PC-9 (cell line): ENCODE measurements at regions of chr20 and their contacts with region 1.

Region 1: GRCh38 chr20:50153485-50154377 is at the start of gene PEDS1:
- DNase-seq: peak; percentile 79 to 94
- H3K4me3 ChIP-seq: peak within 1 kb of the TSS; percentile 80
- H3K27ac ChIP-seq: no peak within 1 kb of the TSS; the same call in 1 of the 2 replicates
- H3K4me1 ChIP-seq: peaks cover 34% of the 10 kb centered on the region
- H3K27me3 ChIP-seq: no peaks in the 10 kb centered on the region
- CTCF ChIP-seq: no peak
- total RNA-seq, gene PEDS1: 34.8 and 37.7 TPM in 2 replicates

Region 2: GRCh38 chr20:50070991-50071888 is 82.5 kb before region 1 on chr20:
- CTCF ChIA-PET with region 1: interaction called, 7 read pairs
- POLR2A ChIA-PET with region 1: no interaction called
- intact Hi-C with region 1: loop called (anchors 2 kb)
- DNase-seq: peak; percentile 69 to 96
- H3K4me3 ChIP-seq: peak overlapping the region; percentile 66
- H3K27ac ChIP-seq: no peak overlapping the region
- H3K4me1 ChIP-seq: 0 out of 2 replicates have a peak, but pooled peaks cover 5% of the 10 kb centered on the region
- H3K27me3 ChIP-seq: no peaks in the 10 kb centered on the region
- CTCF ChIP-seq: peak; percentile 100

Region 3: DNA sequence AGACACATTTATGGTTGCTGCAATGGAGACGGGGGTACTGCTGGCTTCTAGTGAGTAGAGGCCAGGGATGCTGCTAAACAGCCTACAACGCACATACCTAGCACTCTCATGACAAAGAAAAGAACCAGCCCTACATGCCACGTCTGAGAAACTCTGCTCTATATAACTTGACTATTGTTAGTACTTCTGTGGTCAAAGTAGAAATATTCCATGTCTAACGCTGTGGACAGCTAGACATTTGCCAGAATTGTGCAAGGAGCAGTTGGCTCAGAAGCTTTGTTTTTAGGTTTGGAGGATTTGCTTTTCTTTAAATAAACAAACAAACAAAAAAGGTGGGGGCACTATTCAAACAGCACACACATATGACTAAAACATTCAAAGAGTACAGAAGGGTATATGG is 61.3 kb before region 1 on chr20:
- CTCF ChIA-PET with region 1: interaction called, 25 read pairs
- POLR2A ChIA-PET with region 1: interaction called, 5 read pairs
- intact Hi-C with region 1: no loop called
- DNase-seq: no peak
- H3K4me3 ChIP-seq: no peak overlapping the region
- H3K27ac ChIP-seq: 0 out of 2 replicates have a peak overlapping the region, but pooled peaks have one; percentile 11
- H3K4me1 ChIP-seq: peaks cover 25% of the 10 kb centered on the region
- H3K27me3 ChIP-seq: no peaks in the 10 kb centered on the region
- CTCF ChIP-seq: no peak

Region 4: GRCh38 chr20:50120897-50121693 is 32.6 kb before region 1 on chr20:
- CTCF ChIA-PET with region 1: interaction called, 32 read pairs
- POLR2A ChIA-PET with region 1: interaction called, 12 read pairs
- intact Hi-C with region 1: loop called (anchors 1 kb)
- DNase-seq: peak; percentile 66 to 72
- H3K4me3 ChIP-seq: no peak overlapping the region
- H3K27ac ChIP-seq: no peak overlapping the region
- H3K4me1 ChIP-seq: peaks cover 11% of the 10 kb centered on the region
- H3K27me3 ChIP-seq: no peaks in the 10 kb centered on the region
- CTCF ChIP-seq: peak; percentile 90

Region 5: GRCh38 chr20:50172347-50173013 is 18.7 kb after region 1 on chr20:
- CTCF ChIA-PET with region 1: interaction called, 11 read pairs
- POLR2A ChIA-PET with region 1: interaction called, 15 read pairs
- intact Hi-C with region 1: no loop called
- DNase-seq: peak; percentile 74 to 88
- H3K4me3 ChIP-seq: peak overlapping the region; percentile 67
- H3K27ac ChIP-seq: peak overlapping the region; percentile 62
- H3K4me1 ChIP-seq: peaks cover 21% of the 10 kb centered on the region
- H3K27me3 ChIP-seq: no peaks in the 10 kb centered on the region
- CTCF ChIP-seq: no peak